ENCODE measurements at regions of chr9 and their contacts with region 1.

Region 1: DNA sequence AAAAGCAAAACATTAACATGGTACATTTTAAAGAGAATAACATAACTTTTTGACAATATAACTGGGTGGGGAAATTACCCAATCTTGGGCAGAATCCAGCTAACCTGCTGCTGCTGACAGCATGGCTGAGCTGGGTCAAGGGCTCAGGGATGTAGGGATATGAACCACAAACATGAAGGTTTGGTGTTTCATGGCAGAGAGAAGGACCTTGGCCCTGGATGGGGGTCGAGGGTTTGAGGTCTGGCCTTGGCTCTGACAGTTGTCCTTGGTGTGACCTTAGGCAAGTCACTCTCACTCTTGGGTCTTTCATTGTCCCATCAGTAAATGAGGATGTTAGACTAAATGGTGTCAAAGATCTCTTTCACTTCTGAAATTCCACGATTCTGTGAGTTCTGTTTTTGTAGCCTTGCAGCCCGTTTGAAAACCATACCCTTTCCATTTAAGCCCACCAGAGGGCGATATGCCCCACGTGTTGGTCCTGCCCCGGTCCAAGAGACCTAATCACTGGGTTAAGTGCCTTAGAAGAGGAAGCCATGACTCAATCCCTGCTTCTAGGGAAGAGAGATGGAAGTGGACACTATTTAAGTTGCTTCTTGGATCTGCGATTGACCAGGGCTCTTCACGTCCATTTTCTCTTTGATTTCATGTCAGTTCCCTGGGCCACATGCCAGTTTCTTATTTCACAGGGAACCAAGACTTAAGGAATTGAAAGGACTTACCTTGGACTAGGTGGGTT is 56.8 kb upstream of the TEX48 start:
- DNase-seq: peak; percentile 90 to 94 (median 90)
- H3K4me3 ChIP-seq: no peak overlapping the region
- H3K4me3 Mint-ChIP-seq: no peak overlapping the region
- H3K27ac ChIP-seq: peak overlapping the region in 1 of 2 donors; percentile 34
- H3K27ac Mint-ChIP-seq: peak overlapping the region in 5 of 7 donors; percentile 23 to 85 (median 67)
- H3K4me1 ChIP-seq: peaks cover 8 to 15% of the 10 kb centered on the region in 2 donors
- H3K4me1 Mint-ChIP-seq: peaks cover 20% of the 10 kb centered on the region
- H3K27me3 ChIP-seq: no peaks in the 10 kb centered on the region
- H3K27me3 Mint-ChIP-seq: peaks cover 0 to 3% (median 2%) of the 10 kb centered on the region in 3 donors
- CTCF ChIP-seq: peak; percentile 82

Region 2: GRCh38 chr9:114641967-114642366 is 96.8 kb before region 1 on chr9:
- intact Hi-C with region 1: no loop called
- DNase-seq: peak; percentile 47 to 62 (median 61)
- H3K4me3 ChIP-seq: no peak overlapping the region
- H3K4me3 Mint-ChIP-seq: no peak overlapping the region
- H3K27ac ChIP-seq: peak overlapping the region in 1 of 2 donors; percentile 75
- H3K27ac Mint-ChIP-seq: peak overlapping the region; percentile 22 to 82 (median 48)
- H3K4me1 ChIP-seq: peaks cover 9 to 14% of the 10 kb centered on the region in 2 donors
- H3K4me1 Mint-ChIP-seq: peaks cover 16% of the 10 kb centered on the region
- H3K27me3 ChIP-seq: no peaks in the 10 kb centered on the region
- H3K27me3 Mint-ChIP-seq: peaks cover 0 to 2% (median 1%) of the 10 kb centered on the region in 3 donors
- CTCF ChIP-seq: no peak

Region 3: GRCh38 chr9:114662081-114662989 is 76.4 kb before region 1 on chr9:
- intact Hi-C with region 1: loop called in 1 of 2 experiments (anchors 2 kb)
- DNase-seq: peak; percentile 30 to 47 (median 45)
- H3K4me3 ChIP-seq: no peak overlapping the region
- H3K4me3 Mint-ChIP-seq: no peak overlapping the region
- H3K27ac ChIP-seq: no peak overlapping the region
- H3K27ac Mint-ChIP-seq: peak overlapping the region in 1 of 7 donors; percentile 52
- H3K4me1 ChIP-seq: no peaks in the 10 kb centered on the region
- H3K4me1 Mint-ChIP-seq: peaks cover 10% of the 10 kb centered on the region
- H3K27me3 ChIP-seq: no peaks in the 10 kb centered on the region
- H3K27me3 Mint-ChIP-seq: peaks cover 0 to 8% (median 3%) of the 10 kb centered on the region in 3 donors
- CTCF ChIP-seq: peak; percentile 96

Region 4: DNA sequence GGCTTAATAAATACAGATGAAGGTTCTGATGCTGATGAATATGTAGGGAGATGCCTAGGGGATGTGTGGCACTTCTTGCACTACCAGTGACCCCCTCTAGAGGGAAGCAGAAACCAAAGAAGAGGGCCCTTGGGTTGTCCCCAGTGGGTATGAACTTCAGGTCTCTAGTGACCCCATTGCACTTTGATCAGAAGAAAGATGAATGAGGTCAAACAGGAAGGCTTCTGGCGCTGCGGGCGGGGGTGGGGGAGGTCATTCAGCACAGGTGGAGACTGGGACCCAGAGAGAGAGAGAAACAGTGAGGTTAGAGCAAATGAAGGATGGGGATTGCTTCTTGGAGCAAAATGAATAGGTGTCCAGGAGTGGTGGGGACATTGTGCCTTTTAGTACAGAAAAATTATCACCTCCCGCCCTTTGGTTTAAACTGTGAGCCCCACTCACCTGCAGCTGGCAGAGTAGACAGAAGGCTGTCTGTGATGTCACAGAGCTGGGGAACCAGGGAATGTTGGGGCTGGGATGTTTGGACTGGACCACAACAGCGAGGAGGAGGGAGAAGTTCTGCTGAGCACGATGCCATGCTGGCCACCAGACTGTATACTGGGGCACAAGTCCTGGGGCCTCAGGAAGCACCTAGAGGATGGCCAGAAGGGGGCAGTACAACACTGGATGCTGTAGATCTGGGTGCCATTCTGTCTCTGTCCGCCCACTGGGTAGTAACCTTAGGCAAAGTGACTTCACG is 57.0 kb before region 1 on chr9 and contains the start of gene TEX48:
- intact Hi-C with region 1: loop called (anchors 2 to 10 kb)
- DNase-seq: peak; percentile 69 to 76 (median 75)
- H3K4me3 ChIP-seq: no peak within 1 kb of the TSS
- H3K4me3 Mint-ChIP-seq: no peak within 1 kb of the TSS
- H3K27ac ChIP-seq: no peak within 1 kb of the TSS
- H3K27ac Mint-ChIP-seq: peak within 1 kb of the TSS in 3 of 7 donors; percentile 56 to 75 (median 74)
- H3K4me1 ChIP-seq: peaks cover 0 to 3% of the 10 kb centered on the region in 2 donors
- H3K4me1 Mint-ChIP-seq: peaks cover 10% of the 10 kb centered on the region
- H3K27me3 ChIP-seq: no peaks in the 10 kb centered on the region
- H3K27me3 Mint-ChIP-seq: peaks cover 0 to 4% (median 0%) of the 10 kb centered on the region in 3 donors
- CTCF ChIP-seq: peak; percentile 89
- polyA plus RNA-seq, gene TEX48: not detected

Region 5: GRCh38 chr9:114894801-114895433 is 156.2 kb after region 1 on chr9:
- intact Hi-C with region 1: loop called in 1 of 2 experiments (anchors 5 kb)
- DNase-seq: peak; percentile 74 to 92 (median 85)
- H3K4me3 ChIP-seq: peak overlapping the region in 1 of 3 experiments; percentile 21
- H3K4me3 Mint-ChIP-seq: peak overlapping the region in 1 of 2 donors; percentile 39
- H3K27ac ChIP-seq: peak overlapping the region in 1 of 2 donors; percentile 84
- H3K27ac Mint-ChIP-seq: peak overlapping the region; percentile 84 to 97 (median 92)
- H3K4me1 ChIP-seq: peaks cover 68 to 70% of the 10 kb centered on the region in 2 donors
- H3K4me1 Mint-ChIP-seq: peaks cover 42% of the 10 kb centered on the region
- H3K27me3 ChIP-seq: no peaks in the 10 kb centered on the region
- H3K27me3 Mint-ChIP-seq: peaks cover 0 to 1% (median 0%) of the 10 kb centered on the region in 3 donors
- CTCF ChIP-seq: no peak

Region 6: DNA sequence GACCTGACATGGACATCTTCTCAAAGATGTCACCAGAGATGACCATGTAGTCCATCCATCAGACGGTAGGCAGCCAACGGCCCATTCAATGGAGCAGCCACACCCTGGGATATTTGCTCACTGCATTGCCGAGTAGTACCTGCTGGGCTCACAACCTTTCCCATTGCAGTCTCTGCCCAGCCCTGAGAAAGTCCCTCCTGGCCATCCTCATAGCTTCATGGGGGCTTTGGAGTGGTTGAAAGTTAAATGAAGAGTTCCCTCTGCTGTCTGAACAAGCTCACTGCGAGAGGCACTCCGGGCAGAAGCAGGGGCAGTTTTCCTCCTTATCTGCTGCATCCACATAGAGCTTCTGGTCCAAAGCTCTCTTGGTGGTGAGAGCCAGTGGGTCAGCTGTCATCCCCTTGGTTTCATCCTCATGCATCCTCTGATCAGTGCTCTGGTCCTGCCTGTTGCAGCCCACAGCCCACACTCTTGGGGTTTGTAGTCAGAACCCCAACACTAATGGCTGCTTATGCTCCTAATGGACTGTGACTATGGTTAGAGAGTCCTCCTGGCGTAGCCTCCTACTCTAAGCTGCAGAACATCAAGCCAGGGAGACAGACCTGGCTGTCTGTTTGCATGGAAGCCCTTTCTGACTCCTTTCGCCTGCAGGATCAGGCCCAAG is 168.3 kb after region 1 on chr9:
- intact Hi-C with region 1: loop called in 1 of 2 experiments (anchors 10 kb)
- DNase-seq: no peak
- H3K4me3 ChIP-seq: no peak overlapping the region
- H3K4me3 Mint-ChIP-seq: no peak overlapping the region
- H3K27ac ChIP-seq: no peak overlapping the region
- H3K27ac Mint-ChIP-seq: peak overlapping the region in 2 of 7 donors; percentile 24 to 46
- H3K4me1 ChIP-seq: peaks cover 0 to 7% of the 10 kb centered on the region in 2 donors
- H3K4me1 Mint-ChIP-seq: peaks cover 40% of the 10 kb centered on the region
- H3K27me3 ChIP-seq: no peaks in the 10 kb centered on the region
- H3K27me3 Mint-ChIP-seq: no peaks in the 10 kb centered on the region
- CTCF ChIP-seq: peak; percentile 33

Region 7: GRCh38 chr9:114953917-114954316 is 215.2 kb after region 1 on chr9:
- intact Hi-C with region 1: no loop called
- DNase-seq: peak; percentile 86 to 94 (median 93)
- H3K4me3 ChIP-seq: peak overlapping the region in 2 of 3 experiments; percentile 25 to 54
- H3K4me3 Mint-ChIP-seq: peak overlapping the region; percentile 69 to 94
- H3K27ac ChIP-seq: peak overlapping the region; percentile 76 to 99
- H3K27ac Mint-ChIP-seq: peak overlapping the region; percentile 96 to 100 (median 99)
- H3K4me1 ChIP-seq: peaks cover 64 to 67% of the 10 kb centered on the region in 2 donors
- H3K4me1 Mint-ChIP-seq: peaks cover 68% of the 10 kb centered on the region
- H3K27me3 ChIP-seq: no peaks in the 10 kb centered on the region
- H3K27me3 Mint-ChIP-seq: peaks cover 0 to 2% (median 0%) of the 10 kb centered on the region in 3 donors
- CTCF ChIP-seq: no peak

Region 8: DNA sequence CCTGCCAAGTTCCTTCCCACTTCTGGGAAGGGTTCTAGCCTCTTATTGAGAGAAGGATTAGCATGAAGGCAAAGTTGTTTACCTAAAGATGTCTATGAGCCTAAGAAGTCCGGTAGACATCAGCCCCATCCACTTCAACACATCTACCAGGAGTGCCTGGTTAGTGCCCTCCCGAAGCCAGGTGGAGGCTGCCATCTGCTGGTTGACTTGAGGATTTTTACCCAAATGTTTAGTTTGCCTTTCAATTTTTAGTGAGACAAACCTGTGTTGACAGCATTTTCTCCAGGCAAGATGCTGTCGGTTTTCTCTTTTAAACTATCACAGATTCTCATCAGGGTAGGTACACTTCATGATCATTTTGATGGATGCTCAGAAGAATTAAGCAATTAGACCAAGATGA is 275.2 kb after region 1 on chr9:
- intact Hi-C with region 1: loop called (anchors 2 kb)
- DNase-seq: peak; percentile 74 to 84 (median 83)
- H3K4me3 ChIP-seq: no peak overlapping the region
- H3K4me3 Mint-ChIP-seq: no peak overlapping the region
- H3K27ac ChIP-seq: no peak overlapping the region
- H3K27ac Mint-ChIP-seq: peak overlapping the region in 2 of 7 donors; percentile 4 to 71
- H3K4me1 ChIP-seq: peaks cover 6 to 14% of the 10 kb centered on the region in 2 donors
- H3K4me1 Mint-ChIP-seq: peaks cover 50% of the 10 kb centered on the region
- H3K27me3 ChIP-seq: no peaks in the 10 kb centered on the region
- H3K27me3 Mint-ChIP-seq: peaks cover 2 to 3% (median 3%) of the 10 kb centered on the region in 3 donors
- CTCF ChIP-seq: peak; percentile 84